ENCODE measurements at regions of chr10 and their contacts with region 1.

Region 1: GRCh38 chr10:112446855-112447711 is at the starts of genes VTI1A and ZDHHC6:
- DNase-seq: peak; percentile 90
- H3K4me3 ChIP-seq: peak within 1 kb of the TSS; percentile 88
- H3K27ac ChIP-seq: peak within 1 kb of the TSS; percentile 58
- H3K4me1 ChIP-seq: peaks cover 6% of the 10 kb centered on the region
- H3K27me3 ChIP-seq: no peaks in the 10 kb centered on the region
- CTCF ChIP-seq: no peak
- total RNA-seq, gene VTI1A: 34.1 to 38.6 TPM
- total RNA-seq, gene ZDHHC6: 37.9 to 50.7 TPM

Region 2: GRCh38 chr10:112183329-112184051 is 263.6 kb before region 1 on chr10 and contains the start of gene GPAM:
- intact Hi-C with region 1: loop called (anchors 10 kb)
- DNase-seq: peak; percentile 98
- H3K4me3 ChIP-seq: peak within 1 kb of the TSS; percentile 76
- H3K27ac ChIP-seq: peak within 1 kb of the TSS; percentile 65
- H3K4me1 ChIP-seq: no peaks in the 10 kb centered on the region
- H3K27me3 ChIP-seq: no peaks in the 10 kb centered on the region
- CTCF ChIP-seq: no peak
- total RNA-seq, gene GPAM: 7.7 to 8.7 TPM